CD8-positive, alpha-beta memory T cell (primary cell): ENCODE measurements at regions of chr1 and their contacts with region 1.

Region 1: DNA sequence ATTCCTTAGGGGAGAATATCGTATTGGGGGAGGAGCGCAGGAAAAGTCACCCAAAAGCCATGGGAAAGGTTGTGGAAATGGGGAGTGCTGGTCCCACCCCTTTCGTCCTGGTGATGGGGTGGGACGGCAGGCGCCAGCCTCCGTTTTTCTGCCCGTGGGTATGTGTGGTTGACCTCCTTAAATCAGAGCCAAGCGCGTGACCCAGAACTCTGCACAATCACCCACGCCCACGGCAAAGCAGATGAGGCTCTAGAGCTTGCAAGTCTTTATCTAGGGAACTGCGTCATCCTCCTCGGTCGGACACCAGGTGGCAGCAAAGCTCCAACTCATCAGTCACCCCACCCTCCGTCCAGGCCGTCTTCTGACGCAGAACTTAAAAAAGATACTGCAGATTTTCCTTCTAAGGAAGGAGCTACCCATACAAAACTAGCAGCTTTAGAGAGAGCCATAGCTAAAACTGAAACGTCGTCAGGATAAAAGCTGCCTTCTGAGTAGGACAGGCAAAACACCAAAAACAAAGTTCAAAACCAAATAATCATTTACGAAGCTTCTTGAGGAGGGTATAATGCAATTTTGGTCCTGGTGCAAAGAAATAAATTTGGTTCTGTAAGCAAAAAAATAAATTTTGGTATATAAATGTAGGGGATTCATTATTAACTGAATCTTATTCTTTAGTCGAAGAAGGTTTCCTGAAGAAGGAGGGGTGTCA is 62.0 kb downstream of the TBX19 start:
- DNase-seq: peak; percentile 81 to 92 (median 84)
- H3K4me3 ChIP-seq: peak overlapping the region; percentile 23
- H3K4me3 Mint-ChIP-seq: peak overlapping the region; percentile 4 to 70 (median 51)
- H3K27ac ChIP-seq: peak overlapping the region; percentile 10
- H3K27ac Mint-ChIP-seq: peak overlapping the region; percentile 85 to 98 (median 94)
- H3K4me1 ChIP-seq: peaks cover 24% of the 10 kb centered on the region
- H3K4me1 Mint-ChIP-seq: peaks cover 54 to 60% (median 57%) of the 10 kb centered on the region in 3 donors
- H3K27me3 ChIP-seq: no peaks in the 10 kb centered on the region
- H3K27me3 Mint-ChIP-seq: no peaks in the 10 kb centered on the region

Region 2: GRCh38 chr1:168301664-168302334 is 40.9 kb before region 1 on chr1:
- CTCF ChIA-PET with region 1: no interaction called
- POLR2A ChIA-PET with region 1: no interaction called
- DNase-seq: no peak
- H3K4me3 ChIP-seq: no peak overlapping the region
- H3K4me3 Mint-ChIP-seq: no peak overlapping the region
- H3K27ac ChIP-seq: no peak overlapping the region
- H3K27ac Mint-ChIP-seq: no peak overlapping the region
- H3K4me1 ChIP-seq: no peaks in the 10 kb centered on the region
- H3K4me1 Mint-ChIP-seq: no peaks in the 10 kb centered on the region
- H3K27me3 ChIP-seq: no peaks in the 10 kb centered on the region
- H3K27me3 Mint-ChIP-seq: no peaks in the 10 kb centered on the region

Region 3: GRCh38 chr1:168365719-168366479 is 23.2 kb after region 1 on chr1:
- CTCF ChIA-PET with region 1: interaction called, 125 read pairs
- POLR2A ChIA-PET with region 1: interaction called, 10 read pairs
- DNase-seq: no peak
- H3K4me3 ChIP-seq: no peak overlapping the region
- H3K4me3 Mint-ChIP-seq: no peak overlapping the region
- H3K27ac ChIP-seq: no peak overlapping the region
- H3K27ac Mint-ChIP-seq: peak overlapping the region in 1 of 8 donors; percentile 7
- H3K4me1 ChIP-seq: peaks cover 27% of the 10 kb centered on the region
- H3K4me1 Mint-ChIP-seq: peaks cover 40 to 47% (median 45%) of the 10 kb centered on the region in 3 donors
- H3K27me3 ChIP-seq: no peaks in the 10 kb centered on the region
- H3K27me3 Mint-ChIP-seq: no peaks in the 10 kb centered on the region

Region 4: GRCh38 chr1:168386949-168387586 is 44.3 kb after region 1 on chr1:
- CTCF ChIA-PET with region 1: interaction called, 12 read pairs
- POLR2A ChIA-PET with region 1: no interaction called
- DNase-seq: peak; percentile 64 to 88 (median 73)
- H3K4me3 ChIP-seq: no peak overlapping the region
- H3K4me3 Mint-ChIP-seq: peak overlapping the region; percentile 26 to 80 (median 76)
- H3K27ac ChIP-seq: peak overlapping the region; percentile 10
- H3K27ac Mint-ChIP-seq: peak overlapping the region; percentile 78 to 99 (median 94)
- H3K4me1 ChIP-seq: peaks cover 27% of the 10 kb centered on the region
- H3K4me1 Mint-ChIP-seq: peaks cover 30 to 36% (median 33%) of the 10 kb centered on the region in 3 donors
- H3K27me3 ChIP-seq: no peaks in the 10 kb centered on the region
- H3K27me3 Mint-ChIP-seq: peaks cover 0 to 7% of the 10 kb centered on the region in 2 donors

Region 5: GRCh38 chr1:168421399-168422004 is 78.8 kb after region 1 on chr1:
- CTCF ChIA-PET with region 1: interaction called, 18 read pairs
- POLR2A ChIA-PET with region 1: no interaction called
- DNase-seq: peak in 3 of 5 donors; percentile 14 to 61 (median 59)
- H3K4me3 ChIP-seq: no peak overlapping the region
- H3K4me3 Mint-ChIP-seq: peak overlapping the region; percentile 2 to 71 (median 54)
- H3K27ac ChIP-seq: peak overlapping the region; percentile 8
- H3K27ac Mint-ChIP-seq: peak overlapping the region in 7 of 8 donors; percentile 14 to 90 (median 79)
- H3K4me1 ChIP-seq: peaks cover 28% of the 10 kb centered on the region
- H3K4me1 Mint-ChIP-seq: peaks cover 41 to 49% (median 42%) of the 10 kb centered on the region in 3 donors
- H3K27me3 ChIP-seq: no peaks in the 10 kb centered on the region
- H3K27me3 Mint-ChIP-seq: no peaks in the 10 kb centered on the region

Region 6: DNA sequence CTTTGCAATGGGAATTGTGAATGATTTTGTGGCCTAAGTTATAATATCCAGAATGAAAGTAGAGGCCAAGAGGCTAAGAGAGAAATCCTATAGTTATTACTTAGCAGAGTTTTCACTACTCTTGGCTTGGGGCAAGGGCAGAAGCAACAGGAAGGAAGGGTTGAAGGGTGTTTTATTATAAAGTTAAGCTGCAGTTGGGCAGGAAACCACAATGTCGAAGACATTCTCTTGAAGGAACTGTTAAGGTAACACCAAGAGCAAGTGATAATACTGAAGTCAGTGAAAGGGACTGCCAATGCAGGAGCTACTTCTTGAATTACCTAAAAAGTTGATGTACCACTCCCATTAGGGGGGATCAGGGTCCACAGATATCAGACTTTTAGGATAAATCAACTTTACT is 192.8 kb after region 1 on chr1:
- CTCF ChIA-PET with region 1: interaction called, 11 read pairs
- POLR2A ChIA-PET with region 1: interaction called, 4 read pairs
- DNase-seq: peak in 3 of 5 donors; percentile 56 to 66 (median 58)
- H3K4me3 ChIP-seq: peak overlapping the region; percentile 9
- H3K4me3 Mint-ChIP-seq: peak overlapping the region; percentile 14 to 79 (median 74)
- H3K27ac ChIP-seq: no peak overlapping the region
- H3K27ac Mint-ChIP-seq: peak overlapping the region; percentile 68 to 96 (median 82)
- H3K4me1 ChIP-seq: peaks cover 63% of the 10 kb centered on the region
- H3K4me1 Mint-ChIP-seq: peaks cover 70 to 91% (median 91%) of the 10 kb centered on the region in 3 donors
- H3K27me3 ChIP-seq: no peaks in the 10 kb centered on the region
- H3K27me3 Mint-ChIP-seq: no peaks in the 10 kb centered on the region

Region 7: GRCh38 chr1:169348383-169349036 is 1005.8 kb after region 1 on chr1:
- CTCF ChIA-PET with region 1: interaction called, 65 read pairs
- POLR2A ChIA-PET with region 1: interaction called, 4 read pairs
- DNase-seq: peak in 4 of 5 donors; percentile 6 to 50 (median 42)
- H3K4me3 ChIP-seq: no peak overlapping the region
- H3K4me3 Mint-ChIP-seq: no peak overlapping the region
- H3K27ac ChIP-seq: no peak overlapping the region
- H3K27ac Mint-ChIP-seq: no peak overlapping the region
- H3K4me1 ChIP-seq: no peaks in the 10 kb centered on the region
- H3K4me1 Mint-ChIP-seq: peaks cover 1 to 18% (median 8%) of the 10 kb centered on the region in 3 donors
- H3K27me3 ChIP-seq: no peaks in the 10 kb centered on the region
- H3K27me3 Mint-ChIP-seq: no peaks in the 10 kb centered on the region